Endothelial cell of umbilical vein (primary cell): ENCODE measurements at regions of chr6 and their contacts with region 1.

Region 1: DNA sequence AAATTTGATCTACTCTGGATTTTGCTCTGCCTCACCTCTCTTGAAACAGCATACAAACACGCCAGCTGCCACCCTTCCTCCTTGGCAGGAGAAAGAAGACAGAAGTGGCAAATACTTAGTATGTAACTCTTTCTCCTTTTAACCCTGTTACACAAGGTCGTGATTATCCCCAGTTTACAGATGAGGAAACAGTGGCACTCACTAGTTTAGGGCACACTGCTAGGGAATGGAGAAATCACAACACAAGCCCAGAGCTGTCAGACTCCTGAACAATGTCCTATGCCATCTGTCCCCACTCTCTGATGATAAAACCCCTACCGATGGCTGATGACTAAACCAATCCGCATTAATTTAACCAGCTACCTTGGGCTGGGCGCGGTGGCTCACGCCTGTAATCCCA is 79.7 kb downstream of the FGD2 start:
- DNase-seq: no peak
- H3K4me3 ChIP-seq: no peak overlapping the region
- H3K27ac ChIP-seq: no peak overlapping the region
- H3K4me1 ChIP-seq: no peaks in the 10 kb centered on the region
- H3K27me3 ChIP-seq: peaks cover 0 to 5% of the 10 kb centered on the region in 2 experiments
- CTCF ChIP-seq: no peak
- POLR2A ChIP-seq: no peak

Region 2: GRCh38 chr6:36666726-36667591 is 418.2 kb before region 1 on chr6:
- CTCF ChIA-PET with region 1: no interaction called
- POLR2A ChIA-PET with region 1: no interaction called
- dilution Hi-C with region 1: no loop called
- intact Hi-C with region 1: no loop called
- DNase-seq: peak; percentile 41
- H3K4me3 ChIP-seq: no peak overlapping the region
- H3K27ac ChIP-seq: no peak overlapping the region
- H3K4me1 ChIP-seq: no peaks in the 10 kb centered on the region
- H3K27me3 ChIP-seq: no peaks in the 10 kb centered on the region
- CTCF ChIP-seq: no peak
- POLR2A ChIP-seq: no peak

Region 3: GRCh38 chr6:37095997-37096396 is 10.8 kb after region 1 on chr6:
- CTCF ChIA-PET with region 1: interaction called, 11 read pairs
- POLR2A ChIA-PET with region 1: no interaction called
- dilution Hi-C with region 1: no loop called
- intact Hi-C with region 1: no loop called
- DNase-seq: no peak
- H3K4me3 ChIP-seq: no peak overlapping the region
- H3K27ac ChIP-seq: no peak overlapping the region
- H3K4me1 ChIP-seq: no peaks in the 10 kb centered on the region
- H3K27me3 ChIP-seq: no peaks in the 10 kb centered on the region
- CTCF ChIP-seq: no peak
- POLR2A ChIP-seq: no peak